Heart right ventricle (tissue), 16 donors: ENCODE measurements at regions of chr5 and their contacts with region 1.

Region 1: DNA sequence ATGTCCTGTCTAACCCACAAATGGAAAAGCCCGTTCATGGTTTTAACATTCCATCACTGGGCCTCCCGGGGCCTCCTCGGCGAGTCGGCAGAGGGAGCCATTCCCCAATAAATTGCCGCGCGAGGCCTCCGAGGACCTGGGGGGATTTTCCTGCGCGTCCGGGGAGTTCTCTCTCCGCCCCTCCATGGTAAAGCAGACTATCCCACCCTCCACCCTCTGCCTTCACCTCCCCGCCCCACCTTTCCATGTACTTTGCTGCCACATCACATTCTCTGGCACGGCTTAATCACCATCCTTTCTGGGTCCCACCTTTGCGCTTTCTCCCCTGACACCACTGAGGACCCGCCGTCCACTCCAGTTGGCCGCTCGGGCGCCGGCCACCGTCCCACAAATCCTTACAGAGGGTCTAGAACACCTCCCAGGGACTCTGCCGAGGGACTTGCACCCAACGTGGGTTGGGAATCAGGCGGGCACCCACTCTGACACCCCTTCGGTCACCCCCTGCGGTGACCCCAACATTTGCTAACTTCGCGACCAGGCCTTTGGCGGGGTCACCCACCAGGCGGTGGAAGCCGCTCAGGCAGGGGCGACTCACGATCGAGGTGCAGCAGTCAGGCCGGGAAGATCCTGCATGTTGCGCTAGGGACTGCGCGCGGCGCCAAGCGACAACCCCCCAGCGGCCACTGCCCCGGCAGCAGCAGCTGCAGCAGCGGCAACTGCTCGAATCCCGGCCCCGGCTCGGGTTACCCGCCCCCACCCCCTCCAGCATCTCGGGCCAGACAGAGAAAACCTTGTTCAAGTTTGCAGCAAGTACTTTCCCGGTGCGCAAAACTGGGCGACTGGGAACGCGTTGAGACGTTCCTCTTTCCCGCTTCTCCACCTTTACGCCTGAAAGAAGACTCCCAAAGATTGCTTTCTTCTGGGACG is at the start of gene MEGF10:
- DNase-seq: peak; percentile 21 to 35
- ATAC-seq: peak; percentile 51 to 85 (median 70)
- H3K4me3 ChIP-seq: peak within 1 kb of the TSS in 9 of 10 donors; percentile 17 to 51 (median 36)
- H3K27ac ChIP-seq: no peak within 1 kb of the TSS
- H3K4me1 ChIP-seq: peaks cover 0 to 12% (median 5%) of the 10 kb centered on the region in 9 donors
- H3K27me3 ChIP-seq: peaks cover 0 to 82% (median 51%) of the 10 kb centered on the region in 7 donors
- CTCF ChIP-seq: peak; percentile 39 to 74 (median 63)
- total RNA-seq, gene MEGF10: 0.02 to 1.0 (median 0.38) TPM in 9 of 10 donors, not detected in the other

Region 2: GRCh38 chr5:127441799-127442484 is 151.7 kb after region 1 on chr5:
- intact Hi-C with region 1: loop called in 7 of 10 experiments (anchors 1 to 10 kb)
- DNase-seq: no peak
- ATAC-seq: no peak
- H3K4me3 ChIP-seq: no peak overlapping the region
- H3K27ac ChIP-seq: no peak overlapping the region
- H3K4me1 ChIP-seq: no peaks in the 10 kb centered on the region
- H3K27me3 ChIP-seq: peaks cover 0 to 11% (median 0%) of the 10 kb centered on the region in 7 donors
- CTCF ChIP-seq: peak in 5 of 9 donors; percentile 20 to 42 (median 28)

Region 3: DNA sequence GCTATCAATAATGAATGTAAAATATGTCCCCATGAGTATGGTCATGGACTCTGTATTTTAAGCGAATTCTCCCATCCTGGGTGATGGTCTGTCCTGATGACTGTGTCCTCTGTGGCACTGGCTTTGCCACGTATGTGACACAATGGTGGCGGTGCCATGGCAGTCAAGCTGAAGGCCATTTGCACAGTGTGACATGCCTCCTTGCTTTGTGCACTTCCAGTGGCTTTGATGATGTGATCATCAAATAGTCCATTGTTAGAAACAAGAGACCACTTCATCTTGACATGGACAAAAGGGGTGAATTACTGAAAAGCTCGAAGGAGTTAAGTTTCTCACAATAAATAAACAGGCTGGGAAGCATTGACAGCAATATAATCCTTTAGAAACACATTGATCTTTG is 196.2 kb after region 1 on chr5:
- intact Hi-C with region 1: loop called in 6 of 10 experiments (anchors 5 to 10 kb)
- DNase-seq: no peak
- ATAC-seq: no peak
- H3K4me3 ChIP-seq: no peak overlapping the region
- H3K27ac ChIP-seq: no peak overlapping the region
- H3K4me1 ChIP-seq: no peaks in the 10 kb centered on the region
- H3K27me3 ChIP-seq: peaks cover 0 to 29% (median 9%) of the 10 kb centered on the region in 7 donors
- CTCF ChIP-seq: no peak

Region 4: DNA sequence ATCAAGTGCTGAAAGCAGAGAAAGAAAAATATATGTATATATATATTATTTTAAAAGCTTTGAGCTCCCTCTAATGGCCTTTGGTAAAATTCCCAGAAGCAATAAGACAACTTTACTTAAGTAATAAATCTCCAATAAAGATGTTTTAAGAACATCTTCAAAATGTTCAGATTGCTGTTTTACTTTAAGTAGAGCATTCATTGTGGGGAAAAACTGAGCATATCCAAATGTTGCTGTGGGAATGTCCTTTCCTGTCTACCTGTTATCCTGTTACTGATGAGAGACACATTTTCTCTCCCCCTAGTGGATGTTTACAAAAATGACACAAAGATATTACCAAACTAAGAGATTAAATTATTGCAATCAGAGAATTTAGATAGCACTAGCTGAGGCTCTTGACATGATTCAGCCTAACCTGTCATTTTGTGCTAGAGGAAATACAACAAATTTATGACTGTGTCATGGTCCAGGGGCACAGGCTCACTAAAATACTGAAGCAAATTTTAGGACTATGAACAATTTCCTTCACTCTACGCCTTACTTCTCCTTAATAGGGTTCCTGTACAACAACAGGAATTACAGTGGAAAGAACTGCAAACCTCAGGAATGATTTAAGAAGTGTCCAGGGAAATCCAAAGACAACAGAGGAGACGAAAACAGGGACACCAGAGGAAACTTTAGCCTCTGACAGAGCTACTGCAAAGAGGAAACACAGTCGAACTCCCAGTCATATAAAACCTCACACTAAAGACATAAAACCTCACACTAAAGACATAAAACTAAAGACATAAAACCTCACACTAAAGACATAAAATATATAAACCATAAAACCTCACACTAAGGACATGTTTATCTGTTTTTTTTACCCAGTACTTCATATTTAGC is 202.8 kb after region 1 on chr5:
- intact Hi-C with region 1: loop called in 9 of 10 experiments (anchors 1 to 10 kb)
- DNase-seq: no peak
- ATAC-seq: peak in 1 of 8 donors; percentile 35
- H3K4me3 ChIP-seq: no peak overlapping the region
- H3K27ac ChIP-seq: no peak overlapping the region
- H3K4me1 ChIP-seq: no peaks in the 10 kb centered on the region
- H3K27me3 ChIP-seq: peaks cover 0 to 41% (median 9%) of the 10 kb centered on the region in 7 donors
- CTCF ChIP-seq: peak; percentile 39 to 79 (median 70)